Posterior cingulate gyrus (tissue), 11 donors: ENCODE measurements at regions of chr15 and their contacts with region 1.

Region 1: GRCh38 chr15:73633111-73633990 is at the start of gene NPTN:
- DNase-seq: peak; percentile 99 to 100 (median 99)

Region 2: DNA sequence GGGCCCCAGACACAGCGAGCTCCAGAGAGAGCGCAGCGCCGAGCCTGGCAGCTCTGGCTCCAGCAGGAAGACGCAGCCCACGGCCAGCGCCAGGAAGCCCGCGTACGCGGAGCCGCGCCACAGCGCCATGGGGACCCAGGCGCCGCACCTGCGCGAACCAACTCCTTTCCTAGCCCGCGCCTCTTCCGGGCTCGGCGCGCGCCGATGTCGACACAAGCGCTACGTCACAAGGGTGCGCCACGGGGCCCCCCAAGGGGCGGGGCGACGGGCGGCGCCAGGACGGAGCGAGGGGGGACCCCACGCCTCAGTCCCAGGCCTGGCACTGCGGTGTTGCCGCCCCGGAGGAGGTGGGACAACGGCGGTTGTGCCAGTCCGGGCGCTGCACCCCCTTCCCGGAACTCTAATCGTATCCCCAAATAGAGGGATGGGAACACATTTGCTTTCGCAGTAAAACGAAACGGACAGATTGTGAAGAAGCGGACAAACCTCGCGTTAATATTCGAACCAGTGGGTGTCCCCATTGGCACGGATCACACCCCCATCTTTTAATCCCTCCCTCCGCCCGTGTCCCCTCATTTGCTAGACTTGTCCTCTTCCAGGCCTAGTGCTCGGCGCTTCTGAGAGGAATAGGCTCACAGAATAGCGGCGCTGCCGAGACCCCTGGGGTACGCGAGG is 849.7 kb before region 1 on chr15 and contains the start of gene ADPGK:
- intact Hi-C with region 1: loop called (anchors 5 kb)
- DNase-seq: peak; percentile 86 to 98 (median 90)

Region 3: DNA sequence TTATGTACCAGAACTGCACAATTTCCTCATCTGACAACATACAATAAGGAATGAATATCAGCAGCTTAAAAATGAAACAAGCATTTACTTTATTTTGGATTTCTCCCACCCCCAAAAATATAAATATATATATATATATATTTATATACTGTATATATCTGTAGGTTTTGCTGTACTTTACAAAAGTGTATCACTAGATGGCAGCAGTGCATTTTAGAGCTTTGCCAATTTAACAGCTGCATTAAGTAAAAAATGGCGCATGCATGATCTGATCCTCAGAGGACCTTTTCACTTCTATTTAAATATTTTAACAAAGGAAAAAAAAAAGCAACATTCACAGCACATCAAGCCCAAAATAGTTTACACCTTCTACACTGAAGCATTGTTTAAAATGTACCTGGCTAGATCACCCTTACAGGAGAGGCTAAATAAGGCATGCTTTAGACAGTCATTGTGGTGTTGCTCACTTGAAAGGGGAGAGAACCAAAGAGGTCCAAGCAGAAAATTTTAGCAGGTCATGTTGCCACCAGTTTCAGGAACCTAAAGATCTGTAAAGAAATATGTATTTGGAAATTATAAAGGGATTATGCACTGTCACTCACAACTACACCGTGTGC is 72.7 kb before region 1 on chr15:
- intact Hi-C with region 1: loop called (anchors 1 kb)
- DNase-seq: no peak

Region 4: GRCh38 chr15:73683777-73684580 is 50.6 kb after region 1 on chr15 and contains the start of gene CD276:
- intact Hi-C with region 1: loop called (anchors 5 kb)
- DNase-seq: peak; percentile 43 to 93 (median 63)

Region 5: GRCh38 chr15:73991726-73992593 is 358.6 kb after region 1 on chr15 and contains the start of gene STOML1:
- intact Hi-C with region 1: loop called (anchors 5 kb)
- DNase-seq: peak; percentile 83 to 98 (median 90)